Right cardiac atrium (tissue), 5 donors: ENCODE measurements at regions of chr16 and their contacts with region 1.

Region 1: GRCh38 chr16:70653809-70654771 is 7.7 kb downstream of the IL34 start:
- DNase-seq: peak; percentile 70 to 89 (median 84)
- ATAC-seq: peak; percentile 86 to 88
- H3K4me3 ChIP-seq: no peak overlapping the region
- H3K27ac ChIP-seq: no peak overlapping the region
- H3K4me1 ChIP-seq: no peaks in the 10 kb centered on the region
- H3K27me3 ChIP-seq: no peaks in the 10 kb centered on the region

Region 2: GRCh38 chr16:70331588-70332358 is 322.3 kb before region 1 on chr16:
- intact Hi-C with region 1: loop called in 1 of 4 experiments (anchors 10 kb)
- DNase-seq: peak in 1 of 3 donors; percentile 60
- ATAC-seq: peak; percentile 64 to 71
- H3K4me3 ChIP-seq: no peak overlapping the region
- H3K27ac ChIP-seq: no peak overlapping the region
- H3K4me1 ChIP-seq: no peaks in the 10 kb centered on the region
- H3K27me3 ChIP-seq: no peaks in the 10 kb centered on the region

Region 3: GRCh38 chr16:70364399-70364798 is 289.7 kb before region 1 on chr16:
- intact Hi-C with region 1: loop called in 1 of 4 experiments (anchors 5 kb)
- DNase-seq: no peak
- ATAC-seq: peak in 1 of 2 donors; percentile 15
- H3K4me3 ChIP-seq: no peak overlapping the region
- H3K27ac ChIP-seq: no peak overlapping the region
- H3K4me1 ChIP-seq: no peaks in the 10 kb centered on the region
- H3K27me3 ChIP-seq: no peaks in the 10 kb centered on the region

Region 4: GRCh38 chr16:70375636-70376611 is 278.2 kb before region 1 on chr16:
- intact Hi-C with region 1: loop called in 1 of 4 experiments (anchors 10 kb)
- DNase-seq: peak in 1 of 3 donors; percentile 37
- ATAC-seq: no peak
- H3K4me3 ChIP-seq: no peak overlapping the region
- H3K27ac ChIP-seq: no peak overlapping the region
- H3K4me1 ChIP-seq: no peaks in the 10 kb centered on the region
- H3K27me3 ChIP-seq: no peaks in the 10 kb centered on the region

Region 5: DNA sequence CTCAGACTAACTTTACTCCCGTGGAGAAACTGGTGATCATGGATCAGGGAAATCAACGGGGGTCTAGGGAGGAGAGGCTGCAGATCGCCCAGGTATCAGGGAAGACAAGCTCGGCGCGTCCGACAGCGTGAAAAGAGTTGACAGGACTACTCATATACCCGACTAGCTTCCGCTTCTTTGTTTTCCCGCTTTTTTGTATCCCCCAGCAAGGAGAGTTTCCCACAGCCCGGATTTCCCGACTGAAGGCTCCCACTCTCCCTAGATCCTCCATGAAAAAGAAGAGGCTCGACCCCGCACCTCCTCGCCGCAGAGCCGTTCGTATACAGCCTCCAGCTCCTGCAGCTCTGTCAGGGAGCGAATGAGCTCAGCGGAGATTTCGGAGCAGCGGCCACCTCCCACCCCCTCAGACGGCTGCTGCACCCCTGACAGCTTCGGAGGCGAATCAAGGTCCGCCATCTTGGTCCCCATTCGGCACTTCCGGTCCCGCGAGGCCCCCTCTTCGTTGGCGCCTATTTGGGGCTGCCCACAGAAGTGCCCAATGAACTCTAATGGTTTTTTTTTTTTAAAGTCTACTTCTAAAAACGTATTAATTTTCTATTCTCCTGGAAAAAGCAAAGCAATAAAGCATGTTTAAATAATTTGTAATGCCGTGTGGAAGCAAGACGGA is 130.9 kb before region 1 on chr16 and contains the start of gene COG4:
- intact Hi-C with region 1: loop called in 1 of 4 experiments (anchors 10 kb)
- DNase-seq: peak; percentile 88 to 95 (median 94)
- ATAC-seq: peak; percentile 91 to 94
- H3K4me3 ChIP-seq: peak within 1 kb of the TSS; percentile 95
- H3K27ac ChIP-seq: peak within 1 kb of the TSS; percentile 85
- H3K4me1 ChIP-seq: peaks cover 5% of the 10 kb centered on the region
- H3K27me3 ChIP-seq: no peaks in the 10 kb centered on the region
- total RNA-seq, gene COG4: 30.7 to 40.8 (median 37.3) TPM

Region 6: GRCh38 chr16:70534971-70535370 is 119.1 kb before region 1 on chr16:
- intact Hi-C with region 1: loop called in 2 of 4 experiments (anchors 5 to 10 kb)
- DNase-seq: no peak
- ATAC-seq: no peak
- H3K4me3 ChIP-seq: no peak overlapping the region
- H3K27ac ChIP-seq: no peak overlapping the region
- H3K4me1 ChIP-seq: no peaks in the 10 kb centered on the region
- H3K27me3 ChIP-seq: no peaks in the 10 kb centered on the region

Region 7: GRCh38 chr16:70576431-70577255 is 77.4 kb before region 1 on chr16:
- intact Hi-C with region 1: loop called in 1 of 4 experiments (anchors 10 kb)
- DNase-seq: no peak
- ATAC-seq: no peak
- H3K4me3 ChIP-seq: no peak overlapping the region
- H3K27ac ChIP-seq: no peak overlapping the region
- H3K4me1 ChIP-seq: peaks cover 16% of the 10 kb centered on the region
- H3K27me3 ChIP-seq: no peaks in the 10 kb centered on the region